Aorta (tissue), 5 donors: ENCODE measurements at regions of chr17 and their contacts with region 1.

Region 1: DNA sequence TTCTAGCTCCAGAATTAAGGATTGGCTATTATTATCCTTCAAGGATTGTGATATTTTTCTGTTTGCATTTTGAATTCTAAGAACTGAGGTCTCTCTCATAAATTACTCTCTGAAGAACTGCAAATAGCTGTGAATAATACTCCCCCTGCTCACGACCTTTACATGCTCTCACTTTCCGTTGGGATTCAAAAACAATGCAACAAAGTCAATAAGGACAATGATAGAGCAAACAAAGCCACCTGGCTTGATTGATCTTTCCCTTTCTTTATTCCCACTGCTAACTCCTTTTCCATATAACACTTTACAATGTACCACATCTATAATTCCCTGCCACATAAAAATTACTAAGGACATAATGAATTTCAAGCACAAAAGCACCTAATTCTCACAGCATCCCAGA is 523.0 kb upstream of the CA10 start:
- DNase-seq: no peak
- ATAC-seq: no peak
- H3K4me3 ChIP-seq: no peak overlapping the region
- H3K27ac ChIP-seq: no peak overlapping the region
- H3K4me1 ChIP-seq: no peaks in the 10 kb centered on the region
- H3K27me3 ChIP-seq: no peaks in the 10 kb centered on the region

Region 2: GRCh38 chr17:52751051-52751450 is 69.6 kb after region 1 on chr17:
- intact Hi-C with region 1: no loop called
- DNase-seq: no peak
- ATAC-seq: no peak
- H3K4me3 ChIP-seq: no peak overlapping the region
- H3K27ac ChIP-seq: no peak overlapping the region
- H3K4me1 ChIP-seq: no peaks in the 10 kb centered on the region
- H3K27me3 ChIP-seq: no peaks in the 10 kb centered on the region

Region 3: DNA sequence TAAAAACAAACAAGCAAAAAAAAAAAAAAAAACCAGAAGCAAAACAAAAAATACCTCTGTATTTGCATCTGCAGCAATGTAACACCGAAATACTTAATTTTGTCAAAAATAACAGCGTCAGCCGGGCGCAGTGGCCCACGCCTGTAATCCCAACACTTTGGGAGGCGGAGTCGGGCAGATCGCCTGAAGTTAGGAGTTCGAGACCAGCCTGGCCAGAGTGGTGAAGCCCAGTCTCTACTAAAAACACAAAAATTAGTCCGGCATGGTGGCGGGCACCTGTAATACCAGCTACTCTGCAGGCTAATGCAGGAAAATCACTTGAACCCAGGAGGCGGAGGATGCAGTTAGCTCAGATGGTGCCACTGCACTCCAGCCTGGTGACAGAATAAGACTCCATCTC is 160.5 kb after region 1 on chr17:
- intact Hi-C with region 1: loop called in 1 of 2 experiments (anchors 10 kb)
- DNase-seq: no peak
- ATAC-seq: no peak
- H3K4me3 ChIP-seq: no peak overlapping the region
- H3K27ac ChIP-seq: no peak overlapping the region
- H3K4me1 ChIP-seq: no peaks in the 10 kb centered on the region
- H3K27me3 ChIP-seq: no peaks in the 10 kb centered on the region